GM12878 (cell line): ENCODE measurements at regions of chr1 and their contacts with region 1.

Region 1: GRCh38 chr1:244409701-244410100 is 42.0 kb downstream of the ADSS2 start:
- DNase-seq: peak; percentile 55
- ATAC-seq: peak; percentile 91
- H3K4me3 ChIP-seq: peak overlapping the region; percentile 46; the same call in 1 of the 2 replicates
- H3K27ac ChIP-seq: peak overlapping the region; percentile 38; the same call in 1 of the 2 replicates
- H3K4me1 ChIP-seq: peaks cover 21% of the 10 kb centered on the region
- H3K27me3 ChIP-seq: no peaks in the 10 kb centered on the region
- CTCF ChIP-seq: no peak
- EP300 ChIP-seq: no peak; a peak in 1 of 4 replicates
- POLR2A ChIP-seq: no peak
- RAD21 ChIP-seq: no peak

Region 2: GRCh38 chr1:244353551-244354091 is 56.1 kb before region 1 on chr1:
- CTCF ChIA-PET with region 1: no interaction called
- POLR2A ChIA-PET with region 1: no interaction called
- RAD21 ChIA-PET with region 1: no interaction called
- SMC1A ChIA-PET with region 1: no interaction called
- in situ Hi-C with region 1: no loop called
- intact Hi-C with region 1: loop called (anchors 2 kb)
- DNase-seq: no peak
- ATAC-seq: peak; percentile 45
- H3K4me3 ChIP-seq: no peak overlapping the region
- H3K27ac ChIP-seq: peak overlapping the region; percentile 37; the same call in 1 of the 2 replicates
- H3K4me1 ChIP-seq: peaks cover 25% of the 10 kb centered on the region
- H3K27me3 ChIP-seq: no peaks in the 10 kb centered on the region
- CTCF ChIP-seq: no peak
- EP300 ChIP-seq: no peak
- POLR2A ChIP-seq: no peak
- RAD21 ChIP-seq: no peak

Region 3: GRCh38 chr1:244445320-244446181 is 35.9 kb after region 1 on chr1:
- CTCF ChIA-PET with region 1: interaction called, 4 read pairs
- POLR2A ChIA-PET with region 1: interaction called, 3 read pairs
- RAD21 ChIA-PET with region 1: interaction called, 4 read pairs
- SMC1A ChIA-PET with region 1: interaction called, 6 read pairs
- in situ Hi-C with region 1: no loop called
- intact Hi-C with region 1: loop called (anchors 5 kb)
- DNase-seq: no peak
- ATAC-seq: peak; percentile 31
- H3K4me3 ChIP-seq: 0 out of 2 replicates have a peak overlapping the region, but pooled peaks have one; percentile 34
- H3K27ac ChIP-seq: peak overlapping the region; percentile 9; the same call in 1 of the 2 replicates
- H3K4me1 ChIP-seq: peaks cover 4% of the 10 kb centered on the region; the same call in 1 of the 2 replicates
- H3K27me3 ChIP-seq: no peaks in the 10 kb centered on the region
- CTCF ChIP-seq: no peak
- EP300 ChIP-seq: no peak
- POLR2A ChIP-seq: no peak
- RAD21 ChIP-seq: no peak